Activated CD4-positive, alpha-beta T cell treated with anti-CD3 and anti-CD28 coated beads, Interleukin-2, amount 10 ng/mL, durations not matched to agents 24 days and 14 days (primary cell): ENCODE measurements at regions of chr7 and their contacts with region 1.

Region 1: GRCh38 chr7:90424720-90425119 is 21.5 kb downstream of the CLDN12 start:
- DNase-seq: no peak
- H3K4me3 Mint-ChIP-seq: peak overlapping the region; percentile 26
- H3K27ac Mint-ChIP-seq: peak overlapping the region; percentile 61
- H3K4me1 Mint-ChIP-seq: peaks cover 18% of the 10 kb centered on the region
- H3K27me3 Mint-ChIP-seq: no peaks in the 10 kb centered on the region

Region 2: GRCh38 chr7:89002981-89003956 is 1421.5 kb before region 1 on chr7:
- intact Hi-C with region 1: loop called (anchors 10 kb)
- DNase-seq: peak; percentile 61
- H3K4me3 Mint-ChIP-seq: peak overlapping the region; percentile 82
- H3K27ac Mint-ChIP-seq: peak overlapping the region; percentile 86
- H3K4me1 Mint-ChIP-seq: peaks cover 13% of the 10 kb centered on the region
- H3K27me3 Mint-ChIP-seq: peaks cover 6% of the 10 kb centered on the region

Region 3: DNA sequence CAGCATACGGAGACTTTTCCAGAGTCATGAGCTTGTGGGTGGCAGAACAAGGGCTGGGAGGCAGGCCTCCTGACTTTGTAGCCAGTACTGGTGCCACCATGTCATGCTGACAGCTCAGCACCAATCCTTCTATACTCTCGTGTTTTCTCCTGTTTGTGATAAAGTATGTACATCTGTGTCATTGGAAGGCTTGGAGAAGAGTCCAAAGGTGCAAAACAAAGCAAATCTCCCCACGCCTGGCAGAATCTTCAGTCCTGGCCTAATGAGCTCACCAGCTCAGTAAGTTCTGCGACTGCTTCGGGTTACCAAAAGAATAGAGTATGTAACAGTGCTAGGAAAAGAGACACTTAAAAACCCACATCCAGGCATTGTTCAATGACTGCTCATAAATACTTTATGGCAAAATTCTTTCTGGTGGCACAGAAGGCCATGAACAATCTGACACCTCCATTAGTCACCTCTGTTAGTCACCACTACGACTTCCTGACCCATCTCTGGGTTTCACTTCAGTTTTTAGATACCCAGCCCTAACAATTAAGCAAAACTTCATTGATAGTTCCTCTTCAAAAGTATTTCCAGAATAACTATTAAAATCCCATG is 245.9 kb before region 1 on chr7:
- intact Hi-C with region 1: loop called (anchors 1 kb)
- DNase-seq: peak; percentile 61
- H3K4me3 Mint-ChIP-seq: peak overlapping the region; percentile 70
- H3K27ac Mint-ChIP-seq: peak overlapping the region; percentile 94
- H3K4me1 Mint-ChIP-seq: peaks cover 18% of the 10 kb centered on the region
- H3K27me3 Mint-ChIP-seq: no peaks in the 10 kb centered on the region

Region 4: DNA sequence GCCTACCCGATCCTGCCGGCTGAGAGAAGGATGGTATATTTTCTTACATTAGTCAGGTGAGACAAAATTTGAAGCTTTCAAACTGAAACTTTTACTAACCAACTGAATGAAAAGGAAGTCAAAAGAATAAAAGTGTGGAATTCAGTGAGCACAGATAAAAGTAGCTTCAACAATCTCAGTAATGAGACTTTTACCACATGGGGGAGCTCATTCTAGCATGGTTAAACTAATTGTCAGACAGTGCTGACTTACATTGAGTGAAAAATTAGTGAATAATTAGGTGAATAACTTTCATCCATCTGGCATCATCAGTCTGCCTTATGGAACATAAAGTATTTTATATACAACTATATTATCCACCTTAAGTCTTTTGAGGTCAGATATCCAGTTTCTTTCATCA is 112.0 kb before region 1 on chr7:
- intact Hi-C with region 1: loop called (anchors 2 kb)
- DNase-seq: no peak
- H3K4me3 Mint-ChIP-seq: no peak overlapping the region
- H3K27ac Mint-ChIP-seq: no peak overlapping the region
- H3K4me1 Mint-ChIP-seq: no peaks in the 10 kb centered on the region
- H3K27me3 Mint-ChIP-seq: peaks cover 34% of the 10 kb centered on the region

Region 5: GRCh38 chr7:90403174-90404113 is 21.3 kb before region 1 on chr7 and contains the start of gene CLDN12:
- intact Hi-C with region 1: loop called (anchors 1 kb)
- DNase-seq: peak; percentile 90
- H3K4me3 Mint-ChIP-seq: peak within 1 kb of the TSS; percentile 93
- H3K27ac Mint-ChIP-seq: peak within 1 kb of the TSS; percentile 89
- H3K4me1 Mint-ChIP-seq: peaks cover 19% of the 10 kb centered on the region
- H3K27me3 Mint-ChIP-seq: peaks cover 16% of the 10 kb centered on the region
- total RNA-seq, gene CLDN12: 3.3 and 4.2 TPM in 2 replicates